ENCODE measurements at regions of chr3 and their contacts with region 1.

Region 1: GRCh38 chr3:126134219-126134975 is 46.0 kb downstream of the ALDH1L1 start:
- DNase-seq: peak; percentile 11 to 61 (median 24)
- ATAC-seq: peak; percentile 62
- H3K4me3 ChIP-seq: no peak overlapping the region
- H3K4me3 Mint-ChIP-seq: no peak overlapping the region
- H3K27ac ChIP-seq: no peak overlapping the region
- H3K27ac Mint-ChIP-seq: no peak overlapping the region
- H3K4me1 ChIP-seq: peaks cover 4% of the 10 kb centered on the region
- H3K4me1 Mint-ChIP-seq: no peaks in the 10 kb centered on the region
- H3K27me3 ChIP-seq: peaks cover 0 to 8% of the 10 kb centered on the region in 2 experiments
- H3K27me3 Mint-ChIP-seq: peaks cover 36% of the 10 kb centered on the region
- CTCF ChIP-seq: peak; percentile 68

Region 2: GRCh38 chr3:125662675-125663074 is 471.7 kb before region 1 on chr3:
- CTCF ChIA-PET with region 1: no interaction called
- POLR2A ChIA-PET with region 1: no interaction called
- intact Hi-C with region 1: no loop called
- DNase-seq: no peak
- ATAC-seq: no peak
- H3K4me3 ChIP-seq: no peak overlapping the region
- H3K4me3 Mint-ChIP-seq: no peak overlapping the region
- H3K27ac ChIP-seq: no peak overlapping the region
- H3K27ac Mint-ChIP-seq: no peak overlapping the region
- H3K4me1 ChIP-seq: no peaks in the 10 kb centered on the region
- H3K4me1 Mint-ChIP-seq: no peaks in the 10 kb centered on the region
- H3K27me3 ChIP-seq: no peaks in the 10 kb centered on the region
- H3K27me3 Mint-ChIP-seq: no peaks in the 10 kb centered on the region
- CTCF ChIP-seq: no peak

Region 3: GRCh38 chr3:126389112-126389793 is 254.9 kb after region 1 on chr3:
- CTCF ChIA-PET with region 1: no interaction called
- POLR2A ChIA-PET with region 1: no interaction called
- intact Hi-C with region 1: loop called (anchors 1 to 10 kb)
- DNase-seq: peak in 8 of 14 experiments; percentile 7 to 71 (median 25)
- ATAC-seq: no peak
- H3K4me3 ChIP-seq: no peak overlapping the region
- H3K4me3 Mint-ChIP-seq: no peak overlapping the region
- H3K27ac ChIP-seq: no peak overlapping the region
- H3K27ac Mint-ChIP-seq: no peak overlapping the region
- H3K4me1 ChIP-seq: peaks cover 8% of the 10 kb centered on the region
- H3K4me1 Mint-ChIP-seq: peaks cover 4% of the 10 kb centered on the region
- H3K27me3 ChIP-seq: peaks cover 16 to 21% of the 10 kb centered on the region in 2 experiments
- H3K27me3 Mint-ChIP-seq: peaks cover 74% of the 10 kb centered on the region
- CTCF ChIP-seq: peak; percentile 49

Measured in CD4-positive, alpha-beta T cell (primary cell).